SK-N-SH (cell line): ENCODE measurements at regions of chr1 and their contacts with region 1.

Region 1: DNA sequence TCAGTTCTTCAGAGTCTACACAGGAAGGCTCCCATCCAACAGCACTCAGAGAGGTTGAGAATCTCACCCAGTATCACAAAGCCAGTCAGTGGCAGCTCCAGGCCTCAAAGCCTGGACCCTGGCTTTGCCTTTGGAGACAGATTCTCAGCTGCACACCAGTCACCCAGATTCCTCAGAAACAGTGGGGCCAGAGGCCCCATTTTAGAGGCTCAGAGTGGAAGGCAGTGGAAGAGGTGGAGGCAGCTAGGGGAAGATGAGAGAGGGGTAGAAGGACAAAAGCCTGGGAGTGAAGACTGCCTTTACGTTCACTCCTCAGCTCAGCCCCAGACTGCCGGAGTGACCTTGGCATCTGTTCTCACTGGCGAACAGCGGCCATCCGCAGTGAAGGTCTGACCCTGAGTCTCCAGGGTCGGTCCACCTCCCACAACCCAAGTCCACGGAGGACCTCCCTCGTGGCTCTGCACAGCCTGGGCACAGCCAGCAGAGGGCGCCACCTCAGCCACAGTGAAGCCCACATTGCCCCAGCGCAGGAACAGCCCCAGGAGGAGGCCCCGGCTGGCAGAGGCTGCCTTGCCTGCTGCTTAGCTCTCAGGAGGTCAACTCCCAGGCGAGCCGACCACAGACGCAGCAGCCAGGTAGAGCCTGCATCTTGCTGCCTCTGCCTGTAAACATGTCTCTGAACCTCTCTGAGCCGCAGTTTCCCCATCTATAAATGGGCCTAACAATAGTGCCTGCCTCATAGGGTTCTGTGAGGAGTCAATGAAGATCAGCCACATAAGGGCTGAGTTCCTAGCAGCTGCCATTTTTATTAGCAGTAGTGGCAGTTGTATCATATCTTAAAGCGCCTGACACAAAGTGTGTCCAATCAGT is 5.9 kb upstream of the FNDC5 start:
- DNase-seq: peak; percentile 87
- H3K4me3 ChIP-seq: no peak overlapping the region; a peak in 1 of 4 replicates
- H3K27ac ChIP-seq: no peak overlapping the region
- H3K4me1 ChIP-seq: peaks cover 0 to 21% of the 10 kb centered on the region in 2 experiments; a peak in 1 of 4 replicates
- H3K27me3 ChIP-seq: no peaks in the 10 kb centered on the region
- CTCF ChIP-seq: peak; percentile 82
- EP300 ChIP-seq: no peak
- RAD21 ChIP-seq: peak; percentile 57

Region 2: DNA sequence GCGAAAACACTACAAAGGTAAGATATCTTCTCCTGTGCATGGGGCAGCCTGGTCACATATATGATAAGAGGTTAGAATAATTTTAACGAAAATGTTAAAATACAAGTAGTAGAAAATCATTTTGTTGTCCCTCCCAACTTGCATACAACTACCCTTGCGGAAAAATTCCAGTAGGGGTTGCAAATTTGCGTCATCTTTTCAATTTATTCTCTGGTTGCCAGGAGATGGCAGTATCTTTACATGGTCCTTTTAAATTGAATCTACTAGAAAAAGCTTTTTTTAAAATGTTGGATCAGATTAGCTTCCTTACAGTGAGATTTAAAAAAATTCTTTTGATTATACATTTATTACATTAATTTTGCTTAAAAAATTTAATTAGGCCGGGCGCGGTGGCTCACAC is 48.2 kb before region 1 on chr1:
- CTCF ChIA-PET with region 1: interaction called, 24 read pairs
- POLR2A ChIA-PET with region 1: no interaction called
- DNase-seq: peak; percentile 37
- H3K4me3 ChIP-seq: no peak overlapping the region
- H3K27ac ChIP-seq: no peak overlapping the region
- H3K4me1 ChIP-seq: no peaks in the 10 kb centered on the region
- H3K27me3 ChIP-seq: no peaks in the 10 kb centered on the region
- CTCF ChIP-seq: peak; percentile 52
- EP300 ChIP-seq: no peak
- RAD21 ChIP-seq: peak; percentile 57

Region 3: GRCh38 chr1:32892368-32893197 is 16.0 kb after region 1 on chr1:
- CTCF ChIA-PET with region 1: interaction called, 46 read pairs
- POLR2A ChIA-PET with region 1: no interaction called
- DNase-seq: peak; percentile 92
- H3K4me3 ChIP-seq: peak overlapping the region in 1 of 2 experiments; percentile 14; a peak in 3 of 4 replicates
- H3K27ac ChIP-seq: no peak overlapping the region
- H3K4me1 ChIP-seq: peaks cover 0 to 4% of the 10 kb centered on the region in 2 experiments; a peak in 2 of 4 replicates
- H3K27me3 ChIP-seq: 0 out of 2 replicates have a peak, but pooled peaks cover 5% of the 10 kb centered on the region
- CTCF ChIP-seq: peak; percentile 56
- EP300 ChIP-seq: no peak
- RAD21 ChIP-seq: no peak

Region 4: GRCh38 chr1:33055210-33056008 is 178.8 kb after region 1 on chr1:
- CTCF ChIA-PET with region 1: interaction called, 15 read pairs
- POLR2A ChIA-PET with region 1: no interaction called
- DNase-seq: peak; percentile 85
- H3K4me3 ChIP-seq: no peak overlapping the region
- H3K27ac ChIP-seq: peak overlapping the region in 1 of 2 experiments; percentile 56; a peak in 1 of 4 replicates
- H3K4me1 ChIP-seq: peaks cover 3 to 10% of the 10 kb centered on the region in 2 experiments; a peak in 2 of 4 replicates
- H3K27me3 ChIP-seq: no peaks in the 10 kb centered on the region
- CTCF ChIP-seq: peak; percentile 75
- EP300 ChIP-seq: no peak
- RAD21 ChIP-seq: peak; percentile 81

Region 5: GRCh38 chr1:33080885-33081553 is 204.4 kb after region 1 on chr1 and contains the start of gene AZIN2:
- CTCF ChIA-PET with region 1: interaction called, 44 read pairs
- POLR2A ChIA-PET with region 1: no interaction called
- DNase-seq: peak; percentile 98
- H3K4me3 ChIP-seq: peak within 1 kb of the TSS; percentile 73 to 75
- H3K27ac ChIP-seq: peak within 1 kb of the TSS in 1 of 2 experiments; percentile 60; a peak in 2 of 4 replicates
- H3K4me1 ChIP-seq: peaks cover 9 to 13% of the 10 kb centered on the region in 2 experiments; a peak in 2 of 4 replicates
- H3K27me3 ChIP-seq: no peaks in the 10 kb centered on the region
- CTCF ChIP-seq: no peak
- EP300 ChIP-seq: no peak
- RAD21 ChIP-seq: no peak
- polyA plus RNA-seq, gene AZIN2: 17.8 and 20.6 TPM in 2 replicates